MCF 10A (cell line): ENCODE measurements at regions of chr18 and their contacts with region 1.

Region 1: GRCh38 chr18:67104700-67105284 is 411.7 kb downstream of the DSEL start:
- DNase-seq: peak; percentile 76
- H3K4me3 Mint-ChIP-seq: no peak overlapping the region
- H3K27ac Mint-ChIP-seq: no peak overlapping the region
- H3K4me1 Mint-ChIP-seq: no peaks in the 10 kb centered on the region
- H3K27me3 Mint-ChIP-seq: peaks cover 83% of the 10 kb centered on the region
- CTCF ChIP-seq: peak; percentile 68

Region 2: GRCh38 chr18:66749475-66750035 is 355.2 kb before region 1 on chr18:
- CTCF ChIA-PET with region 1: no interaction called
- POLR2A ChIA-PET with region 1: no interaction called
- intact Hi-C with region 1: no loop called
- DNase-seq: no peak
- H3K4me3 Mint-ChIP-seq: no peak overlapping the region
- H3K27ac Mint-ChIP-seq: no peak overlapping the region
- H3K4me1 Mint-ChIP-seq: no peaks in the 10 kb centered on the region
- H3K27me3 Mint-ChIP-seq: peaks cover 13% of the 10 kb centered on the region
- CTCF ChIP-seq: no peak

Region 3: GRCh38 chr18:67199993-67200617 is 95.3 kb after region 1 on chr18:
- CTCF ChIA-PET with region 1: interaction called, 72 read pairs
- POLR2A ChIA-PET with region 1: interaction called, 4 read pairs
- intact Hi-C with region 1: loop called (anchors 1 kb)
- DNase-seq: peak; percentile 65
- H3K4me3 Mint-ChIP-seq: no peak overlapping the region
- H3K27ac Mint-ChIP-seq: no peak overlapping the region
- H3K4me1 Mint-ChIP-seq: no peaks in the 10 kb centered on the region
- H3K27me3 Mint-ChIP-seq: peaks cover 79% of the 10 kb centered on the region
- CTCF ChIP-seq: peak; percentile 53